MCF 10A (cell line): ENCODE measurements at regions of chr2 and their contacts with region 1.

Region 1: GRCh38 chr2:47357483-47357882 is 45.5 kb upstream of the MSH2 start:
- DNase-seq: peak; percentile 85
- H3K4me3 Mint-ChIP-seq: no peak overlapping the region
- H3K27ac Mint-ChIP-seq: no peak overlapping the region
- H3K4me1 Mint-ChIP-seq: peaks cover 6% of the 10 kb centered on the region
- H3K27me3 Mint-ChIP-seq: no peaks in the 10 kb centered on the region
- CTCF ChIP-seq: no peak

Region 2: GRCh38 chr2:47339745-47340541 is 17.5 kb before region 1 on chr2:
- CTCF ChIA-PET with region 1: interaction called, 13 read pairs
- POLR2A ChIA-PET with region 1: interaction called, 4 read pairs
- intact Hi-C with region 1: no loop called
- DNase-seq: peak; percentile 93
- H3K4me3 Mint-ChIP-seq: no peak overlapping the region
- H3K27ac Mint-ChIP-seq: no peak overlapping the region
- H3K4me1 Mint-ChIP-seq: peaks cover 12% of the 10 kb centered on the region
- H3K27me3 Mint-ChIP-seq: no peaks in the 10 kb centered on the region
- CTCF ChIP-seq: no peak

Region 3: DNA sequence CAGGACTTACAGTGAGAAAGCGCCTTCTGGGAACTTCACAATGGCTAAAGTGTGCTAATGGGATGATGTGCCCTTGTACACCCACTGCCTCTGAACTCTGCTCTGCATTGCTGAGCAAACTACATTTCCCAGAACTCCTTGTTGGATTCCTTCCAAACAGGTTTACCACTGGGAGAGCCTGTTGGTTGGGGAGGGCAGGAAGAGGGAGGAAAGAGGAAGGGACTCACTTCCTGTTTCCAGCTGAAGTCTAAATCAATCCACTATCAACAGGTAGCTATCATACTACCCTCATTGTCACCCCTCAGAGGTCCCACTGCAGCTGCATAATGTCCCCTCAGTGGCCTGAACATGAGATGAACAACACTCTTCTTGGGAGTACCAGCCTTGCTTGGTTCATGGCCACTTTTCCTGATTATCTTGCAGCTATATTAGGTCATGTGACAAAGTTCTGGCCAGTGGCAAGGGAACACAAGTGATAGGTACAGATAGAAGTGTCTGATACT is 155.1 kb after region 1 on chr2:
- CTCF ChIA-PET with region 1: no interaction called
- POLR2A ChIA-PET with region 1: no interaction called
- intact Hi-C with region 1: no loop called
- DNase-seq: peak; percentile 17
- H3K4me3 Mint-ChIP-seq: no peak overlapping the region
- H3K27ac Mint-ChIP-seq: no peak overlapping the region
- H3K4me1 Mint-ChIP-seq: no peaks in the 10 kb centered on the region
- H3K27me3 Mint-ChIP-seq: peaks cover 11% of the 10 kb centered on the region
- CTCF ChIP-seq: no peak